ENCODE measurements at regions of chr2 and their contacts with region 1.

Region 1: GRCh38 chr2:210399440-210400041 is 77.0 kb downstream of the LANCL1 start:
- DNase-seq: no peak
- ATAC-seq: no peak
- H3K4me3 ChIP-seq: no peak overlapping the region
- H3K27ac ChIP-seq: no peak overlapping the region
- H3K4me1 ChIP-seq: no peaks in the 10 kb centered on the region
- H3K27me3 ChIP-seq: no peaks in the 10 kb centered on the region

Region 2: DNA sequence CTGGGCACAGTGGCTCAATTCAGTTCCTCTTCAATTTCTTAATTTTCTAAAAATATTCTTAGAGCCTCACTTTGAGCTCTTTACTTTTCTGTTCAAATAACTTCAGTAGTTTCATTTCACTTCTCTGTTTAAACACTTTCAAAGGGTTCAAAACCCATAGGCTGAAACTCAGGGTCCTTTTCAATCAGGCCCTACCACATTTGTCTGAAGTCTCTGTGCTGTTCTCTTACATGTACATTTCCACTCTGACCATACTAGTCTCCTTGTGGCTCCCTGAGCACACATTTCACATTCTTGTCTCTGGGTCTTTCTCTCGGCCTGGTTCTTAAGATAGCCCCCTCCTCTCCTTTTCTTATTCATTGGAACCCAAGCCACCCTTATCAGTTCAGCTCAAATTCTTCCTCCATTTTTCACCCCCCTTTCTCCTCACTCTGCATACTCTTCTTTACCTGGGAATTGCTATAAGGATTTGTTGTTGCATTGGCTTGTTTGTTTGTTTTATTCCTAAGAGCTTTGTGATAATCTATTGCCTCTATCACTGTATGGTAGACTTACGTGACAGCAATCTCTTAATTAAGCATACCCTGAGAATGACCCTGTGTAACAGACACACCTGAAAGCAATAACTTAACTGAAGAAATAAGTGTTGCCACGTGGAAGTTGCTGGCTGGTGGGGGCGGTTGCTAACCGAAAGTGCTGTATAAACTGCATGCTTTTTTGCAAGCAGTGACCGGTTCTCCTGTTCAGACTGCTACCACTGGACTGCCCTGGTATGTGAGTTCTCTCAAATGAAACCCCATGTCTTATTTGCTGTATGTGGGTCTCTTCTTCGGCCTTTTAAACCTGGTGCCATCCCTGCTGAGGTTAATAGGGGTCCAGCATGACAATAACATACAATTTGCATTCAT is 146.6 kb before region 1 on chr2:
- intact Hi-C with region 1: loop called (anchors 2 to 10 kb)
- DNase-seq: no peak
- ATAC-seq: no peak
- H3K4me3 ChIP-seq: no peak overlapping the region
- H3K27ac ChIP-seq: no peak overlapping the region
- H3K4me1 ChIP-seq: no peaks in the 10 kb centered on the region
- H3K27me3 ChIP-seq: no peaks in the 10 kb centered on the region

Region 3: GRCh38 chr2:211329432-211329831 is 929.9 kb after region 1 on chr2:
- intact Hi-C with region 1: no loop called
- DNase-seq: no peak
- ATAC-seq: no peak
- H3K4me3 ChIP-seq: no peak overlapping the region
- H3K27ac ChIP-seq: no peak overlapping the region
- H3K4me1 ChIP-seq: no peaks in the 10 kb centered on the region
- H3K27me3 ChIP-seq: no peaks in the 10 kb centered on the region